Prostate gland (tissue), 2 donors: ENCODE measurements at regions of chr19 and their contacts with region 1.

Region 1: DNA sequence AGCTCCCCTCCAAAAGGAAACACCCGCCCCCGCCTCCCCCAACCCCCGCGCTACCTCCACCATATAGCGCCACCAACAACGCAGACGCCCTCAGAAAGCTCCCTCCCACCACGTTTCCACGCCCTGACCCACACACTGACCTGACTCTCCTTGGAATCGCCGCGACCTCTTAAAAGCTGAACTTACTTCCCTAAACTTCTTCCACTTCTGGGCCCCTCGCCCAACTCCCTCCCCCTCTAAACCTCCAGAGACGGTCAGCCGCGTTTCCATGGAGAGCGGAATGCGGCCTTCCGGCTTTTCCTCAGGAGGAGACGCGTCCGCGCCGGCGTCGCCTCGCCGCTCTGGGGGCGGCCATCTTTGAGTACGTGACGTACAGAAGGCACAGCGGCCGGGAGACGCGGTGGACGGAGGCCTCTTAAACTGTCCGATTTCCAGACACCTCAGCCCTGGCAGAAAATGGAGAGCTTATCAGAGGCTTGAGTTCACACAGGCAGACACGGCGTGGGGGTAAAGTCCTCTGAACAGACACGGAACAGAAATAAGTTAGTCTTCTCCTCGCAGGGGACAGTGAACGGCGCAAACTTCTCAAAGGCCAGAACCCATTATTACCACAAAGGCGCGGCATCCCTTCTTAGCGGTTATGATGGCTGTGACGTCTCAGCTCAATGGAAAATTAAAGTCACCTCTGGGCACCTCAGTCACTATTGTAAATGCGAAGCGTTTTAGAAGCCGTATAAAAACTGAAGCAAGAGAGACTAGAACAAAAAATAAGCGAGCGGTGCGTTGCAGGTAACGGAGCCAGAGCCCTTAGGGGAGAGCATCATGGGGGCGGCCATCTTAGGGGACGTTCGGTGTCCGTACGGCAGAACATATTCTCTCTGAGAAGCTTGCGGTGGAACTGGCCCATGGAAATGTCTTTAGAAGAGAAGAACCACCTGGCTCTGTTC is at the start of gene ZNF432:
- DNase-seq: peak; percentile 83
- H3K4me3 ChIP-seq: peak within 1 kb of the TSS; percentile 57 to 61
- H3K27ac ChIP-seq: peak within 1 kb of the TSS; percentile 91 to 93
- H3K4me1 ChIP-seq: no peaks in the 10 kb centered on the region
- H3K27me3 ChIP-seq: no peaks in the 10 kb centered on the region
- CTCF ChIP-seq: no peak
- POLR2A ChIP-seq: no peak
- total RNA-seq, gene ZNF432: 9.3 to 38.6 TPM

Region 2: GRCh38 chr19:52007806-52008557 is 40.8 kb before region 1 on chr19 and contains the start of gene ZNF615:
- intact Hi-C with region 1: loop called (anchors 5 kb)
- DNase-seq: peak; percentile 91
- H3K4me3 ChIP-seq: peak within 1 kb of the TSS; percentile 74 to 79
- H3K27ac ChIP-seq: peak within 1 kb of the TSS; percentile 89 to 92
- H3K4me1 ChIP-seq: no peaks in the 10 kb centered on the region
- H3K27me3 ChIP-seq: no peaks in the 10 kb centered on the region
- CTCF ChIP-seq: no peak
- POLR2A ChIP-seq: peak; percentile 45
- total RNA-seq, gene ZNF615: 29.4 to 35.8 TPM

Region 3: DNA sequence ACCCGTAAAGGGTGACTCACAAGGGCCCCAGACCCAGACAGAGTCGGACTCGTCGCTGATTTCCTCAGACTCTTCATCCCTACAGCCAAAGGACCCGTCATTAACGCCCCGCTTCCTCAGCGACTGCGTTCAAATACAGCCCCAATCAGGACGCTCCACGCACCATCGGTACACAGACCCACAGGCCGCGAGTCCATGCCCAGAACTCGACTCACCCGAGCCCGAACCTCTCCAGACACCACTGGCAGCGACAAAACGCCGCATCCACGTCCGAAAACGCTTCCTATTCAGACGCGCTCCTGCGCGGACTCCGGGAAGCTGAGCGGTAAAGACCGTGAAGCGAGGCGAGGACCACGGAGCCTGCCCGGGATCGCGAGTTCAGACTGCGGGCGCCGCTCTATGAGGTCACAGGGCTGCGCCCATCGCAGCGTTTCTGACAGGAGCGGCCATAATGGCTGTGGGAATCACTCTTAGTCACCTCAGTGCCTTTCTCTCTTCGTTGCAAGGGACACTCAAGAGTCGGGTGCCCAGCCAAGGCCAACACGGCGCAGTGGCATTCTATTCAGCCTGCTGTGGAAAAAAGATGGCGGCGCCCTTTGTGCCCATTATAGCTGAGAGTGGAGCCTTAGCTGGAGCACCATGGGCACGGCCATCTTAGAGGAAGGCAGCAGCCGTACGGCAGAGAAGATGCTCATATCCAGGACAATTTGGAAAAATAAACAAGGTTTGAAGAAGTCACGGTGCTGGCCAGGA is 20.6 kb before region 1 on chr19 and contains the start of gene ZNF614:
- intact Hi-C with region 1: loop called (anchors 2 kb)
- DNase-seq: peak; percentile 85
- H3K4me3 ChIP-seq: peak within 1 kb of the TSS; percentile 69 to 73
- H3K27ac ChIP-seq: peak within 1 kb of the TSS; percentile 91 to 97
- H3K4me1 ChIP-seq: no peaks in the 10 kb centered on the region
- H3K27me3 ChIP-seq: no peaks in the 10 kb centered on the region
- CTCF ChIP-seq: no peak
- POLR2A ChIP-seq: peak; percentile 27
- total RNA-seq, gene ZNF614: 12.7 to 15.4 TPM